ENCODE measurements at regions of chr1 and their contacts with region 1.

Region 1: GRCh38 chr1:244272471-244273261 is 179.0 kb downstream of the ADSS2 start:
- DNase-seq: peak; percentile 32 to 70
- ATAC-seq: peak; percentile 90 to 91
- H3K4me3 ChIP-seq: no peak overlapping the region
- H3K27ac ChIP-seq: peak overlapping the region; percentile 2 to 56 (median 36)
- H3K4me1 ChIP-seq: peaks cover 0 to 5% of the 10 kb centered on the region in 2 donors
- H3K27me3 ChIP-seq: no peaks in the 10 kb centered on the region
- CTCF ChIP-seq: peak; percentile 88 to 97 (median 90)
- POLR2A ChIP-seq: no peak

Region 2: DNA sequence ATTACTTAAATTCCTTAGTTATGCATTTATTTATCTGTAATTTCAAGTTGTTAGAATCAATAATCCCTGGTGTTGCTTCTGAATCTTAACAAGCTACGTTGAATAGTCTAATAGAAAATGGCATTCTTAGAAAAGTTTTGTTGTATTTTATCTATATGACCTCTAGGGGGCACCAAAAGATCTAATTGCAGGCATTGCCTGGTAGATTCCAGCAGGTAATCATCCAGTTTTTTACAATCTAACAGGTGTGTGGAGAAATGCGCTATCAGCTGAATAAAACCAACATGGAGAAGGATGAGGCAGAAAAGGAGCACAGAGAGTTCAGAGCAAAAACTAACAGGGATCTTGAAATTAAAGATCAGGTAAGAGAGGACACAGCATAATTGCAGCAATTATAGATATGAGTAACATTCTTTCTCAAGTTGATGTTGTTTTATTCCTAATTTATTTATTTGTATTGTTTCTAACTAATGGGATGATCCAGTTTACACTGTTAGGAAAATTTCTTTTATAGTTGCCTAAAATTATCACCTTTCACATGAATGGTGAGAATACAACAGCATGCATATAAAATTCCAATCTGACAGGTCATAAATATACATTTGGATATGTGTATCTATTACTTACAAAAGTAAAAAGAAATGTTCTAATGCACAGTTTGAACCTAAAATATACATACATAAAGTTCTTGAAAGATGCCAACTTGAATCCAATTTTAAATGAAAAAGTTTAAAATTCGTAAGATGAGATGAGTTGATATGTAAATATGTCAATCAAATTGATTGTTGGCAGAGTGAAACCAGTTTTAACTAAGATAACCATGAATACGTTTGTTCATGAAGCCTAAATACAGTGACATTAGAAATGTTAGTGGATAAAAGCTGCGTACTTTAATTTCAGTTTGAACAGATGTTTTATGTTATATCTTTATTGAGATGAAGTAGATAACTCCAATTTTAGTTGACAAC is 928.4 kb before region 1 on chr1:
- in situ Hi-C with region 1: loop called in 3 of 4 experiments (anchors 5 to 10 kb)
- intact Hi-C with region 1: loop called (anchors 5 kb)
- DNase-seq: no peak
- ATAC-seq: peak; percentile 52 to 71
- H3K4me3 ChIP-seq: no peak overlapping the region
- H3K27ac ChIP-seq: no peak overlapping the region
- H3K4me1 ChIP-seq: no peaks in the 10 kb centered on the region
- H3K27me3 ChIP-seq: no peaks in the 10 kb centered on the region
- CTCF ChIP-seq: peak; percentile 54 to 81 (median 68)
- POLR2A ChIP-seq: no peak

Region 3: DNA sequence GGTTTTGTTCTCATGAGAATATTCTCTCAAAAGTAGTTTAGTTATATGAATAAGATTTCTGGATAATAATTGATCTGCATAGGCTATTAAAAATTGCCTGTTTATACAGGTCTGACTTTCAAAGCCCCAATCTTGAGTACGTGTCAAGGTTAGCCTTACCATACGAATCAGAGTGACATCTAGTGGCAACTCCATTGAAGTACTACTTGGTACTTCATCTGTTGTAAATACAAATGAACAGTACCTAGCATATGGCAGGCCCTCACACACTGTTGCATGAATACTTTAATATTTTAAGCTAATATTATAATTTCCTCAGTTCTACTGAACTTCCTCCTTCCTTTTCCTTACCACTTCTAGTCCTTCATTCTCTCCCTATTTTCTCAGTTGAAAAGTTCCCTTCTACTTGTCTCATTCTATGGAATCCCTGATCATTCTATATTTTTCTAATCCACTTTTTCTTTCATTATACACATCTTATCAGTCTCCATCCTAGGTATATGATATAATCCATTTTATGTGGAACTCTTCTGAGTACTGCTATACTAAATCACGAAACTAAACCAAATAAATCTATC is 523.9 kb before region 1 on chr1:
- in situ Hi-C with region 1: loop called in 1 of 4 experiments (anchors 25 kb)
- intact Hi-C with region 1: loop called (anchors 10 kb)
- DNase-seq: no peak
- ATAC-seq: peak; percentile 74 to 97
- H3K4me3 ChIP-seq: no peak overlapping the region
- H3K27ac ChIP-seq: no peak overlapping the region
- H3K4me1 ChIP-seq: peaks cover 0 to 4% of the 10 kb centered on the region in 2 donors
- H3K27me3 ChIP-seq: no peaks in the 10 kb centered on the region
- CTCF ChIP-seq: peak; percentile 43 to 84 (median 60)
- POLR2A ChIP-seq: no peak

Region 4: DNA sequence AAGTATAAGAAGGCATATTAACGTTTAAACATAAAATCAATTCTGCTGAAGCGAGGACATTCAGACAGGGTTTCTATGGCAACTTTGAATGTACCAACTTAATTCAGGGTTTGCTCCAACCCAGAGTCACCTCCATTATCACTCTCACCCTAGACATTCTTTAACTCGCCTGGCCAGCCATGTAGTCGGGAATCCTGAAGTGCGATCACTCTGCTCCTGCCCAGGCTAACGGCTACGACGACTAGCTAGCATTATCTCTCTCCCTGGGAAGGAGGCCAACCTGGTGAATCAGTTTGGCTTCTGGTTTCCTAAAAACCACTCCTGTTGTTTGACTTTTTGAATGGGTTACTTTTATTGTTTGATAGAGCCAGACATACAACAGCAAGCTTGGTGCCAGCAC is 260.5 kb before region 1 on chr1:
- in situ Hi-C with region 1: no loop called
- intact Hi-C with region 1: loop called (anchors 1 kb)
- DNase-seq: no peak
- ATAC-seq: no peak
- H3K4me3 ChIP-seq: peak overlapping the region in 1 of 4 donors; percentile 7
- H3K27ac ChIP-seq: no peak overlapping the region
- H3K4me1 ChIP-seq: peaks cover 4 to 6% of the 10 kb centered on the region in 2 donors
- H3K27me3 ChIP-seq: peaks cover 13 to 22% (median 15%) of the 10 kb centered on the region in 3 donors
- CTCF ChIP-seq: no peak
- POLR2A ChIP-seq: no peak

Region 5: GRCh38 chr1:244137725-244138124 is 134.9 kb before region 1 on chr1:
- in situ Hi-C with region 1: no loop called
- intact Hi-C with region 1: no loop called
- DNase-seq: no peak
- ATAC-seq: no peak
- H3K4me3 ChIP-seq: no peak overlapping the region
- H3K27ac ChIP-seq: peak overlapping the region in 3 of 4 donors; percentile 40 to 47 (median 45)
- H3K4me1 ChIP-seq: no peaks in the 10 kb centered on the region
- H3K27me3 ChIP-seq: no peaks in the 10 kb centered on the region
- CTCF ChIP-seq: no peak
- POLR2A ChIP-seq: no peak

Region 6: GRCh38 chr1:244154872-244155531 is 117.7 kb before region 1 on chr1:
- in situ Hi-C with region 1: no loop called
- intact Hi-C with region 1: loop called (anchors 5 kb)
- DNase-seq: peak; percentile 56 to 84
- ATAC-seq: peak; percentile 96
- H3K4me3 ChIP-seq: peak overlapping the region; percentile 29 to 39 (median 35)
- H3K27ac ChIP-seq: peak overlapping the region; percentile 76 to 86 (median 78)
- H3K4me1 ChIP-seq: peaks cover 7 to 8% of the 10 kb centered on the region in 2 donors
- H3K27me3 ChIP-seq: no peaks in the 10 kb centered on the region
- CTCF ChIP-seq: peak in 4 of 5 experiments; percentile 22 to 44 (median 31)
- POLR2A ChIP-seq: peak; percentile 56 to 71

Region 7: DNA sequence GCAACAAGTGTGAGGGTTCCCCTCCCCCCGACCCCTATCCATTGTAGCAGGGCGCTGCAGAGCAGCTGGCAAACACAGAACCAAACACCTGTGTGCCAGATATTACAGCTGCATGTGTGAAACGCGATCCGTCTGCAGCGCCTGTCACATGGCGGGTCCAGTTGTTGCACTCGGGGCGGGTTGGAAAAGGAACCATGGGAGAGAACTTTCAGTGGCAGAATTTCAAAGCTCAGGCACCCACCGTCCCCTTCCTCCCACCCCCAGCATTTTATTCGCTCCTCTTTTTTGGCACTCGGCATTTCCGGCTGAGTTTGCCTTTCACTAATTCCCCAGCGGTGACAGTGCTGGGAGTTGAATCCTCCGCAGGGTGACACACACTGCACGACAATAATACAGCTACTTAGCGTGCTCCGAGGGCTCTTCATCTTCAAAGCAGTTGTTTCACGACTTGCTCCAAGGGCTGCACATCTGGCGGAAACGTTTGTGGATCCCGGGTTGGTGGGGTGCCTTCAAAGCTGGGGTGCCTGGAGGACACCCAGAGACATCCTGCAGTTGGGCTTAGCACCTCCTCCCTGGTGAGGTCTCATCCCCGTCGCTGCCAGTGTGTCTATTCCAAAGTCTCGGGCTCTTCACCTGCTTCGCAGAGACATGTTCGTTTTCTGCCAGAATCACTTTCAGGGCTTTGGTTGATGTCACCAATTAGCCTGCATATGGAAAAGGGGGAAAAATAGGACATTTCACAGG is 40.9 kb before region 1 on chr1:
- in situ Hi-C with region 1: no loop called
- intact Hi-C with region 1: loop called (anchors 5 kb)
- DNase-seq: peak; percentile 85 to 93
- ATAC-seq: peak; percentile 84 to 89
- H3K4me3 ChIP-seq: peak overlapping the region; percentile 38 to 56 (median 52)
- H3K27ac ChIP-seq: peak overlapping the region; percentile 85 to 94 (median 92)
- H3K4me1 ChIP-seq: peaks cover 15 to 23% of the 10 kb centered on the region in 2 donors
- H3K27me3 ChIP-seq: no peaks in the 10 kb centered on the region
- CTCF ChIP-seq: no peak
- POLR2A ChIP-seq: peak in 1 of 2 donors; percentile 30

Region 8: GRCh38 chr1:244559545-244559944 is 286.9 kb after region 1 on chr1:
- in situ Hi-C with region 1: no loop called
- intact Hi-C with region 1: no loop called
- DNase-seq: no peak
- ATAC-seq: no peak
- H3K4me3 ChIP-seq: no peak overlapping the region
- H3K27ac ChIP-seq: no peak overlapping the region
- H3K4me1 ChIP-seq: no peaks in the 10 kb centered on the region
- H3K27me3 ChIP-seq: no peaks in the 10 kb centered on the region
- CTCF ChIP-seq: no peak
- POLR2A ChIP-seq: no peak

Region 9: DNA sequence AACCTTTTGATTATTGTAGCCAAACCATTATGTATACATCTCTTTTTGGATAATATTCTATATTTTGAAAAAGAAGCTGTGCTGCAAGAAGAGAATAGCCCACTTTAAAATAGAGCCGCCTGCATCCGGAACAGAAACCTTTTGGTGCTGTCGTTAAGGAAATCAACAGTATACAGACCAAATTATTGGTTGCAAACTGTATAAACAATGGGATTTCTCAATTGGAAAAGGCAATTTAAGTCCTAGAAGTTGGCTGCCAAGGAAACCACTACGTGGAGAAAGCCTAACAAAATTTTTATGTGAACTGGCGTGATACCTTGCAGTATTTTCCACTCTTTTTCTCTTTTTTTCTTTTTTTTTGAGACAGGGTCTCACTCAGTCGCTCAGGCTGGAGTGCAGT is 406.0 kb after region 1 on chr1:
- in situ Hi-C with region 1: no loop called
- intact Hi-C with region 1: no loop called
- DNase-seq: no peak
- ATAC-seq: no peak
- H3K4me3 ChIP-seq: no peak overlapping the region
- H3K27ac ChIP-seq: no peak overlapping the region
- H3K4me1 ChIP-seq: peaks cover 38 to 39% of the 10 kb centered on the region in 2 donors
- H3K27me3 ChIP-seq: no peaks in the 10 kb centered on the region
- CTCF ChIP-seq: no peak
- POLR2A ChIP-seq: no peak

Measured in gastrocnemius medialis (tissue), 4 donors.